ENCODE measurements at regions of chr16 and their contacts with region 1.

Region 1: GRCh38 chr16:79601931-79602627 is 1.5 kb upstream of the MAF start:
- DNase-seq: peak; percentile 51 to 78 (median 72)
- ATAC-seq: peak; percentile 20
- H3K4me3 ChIP-seq: peak overlapping the region; percentile 84
- H3K4me3 Mint-ChIP-seq: peak overlapping the region; percentile 90 to 98 (median 94)
- H3K27ac ChIP-seq: no peak overlapping the region
- H3K27ac Mint-ChIP-seq: peak overlapping the region in 7 of 9 donors; percentile 3 to 98 (median 66)
- H3K4me1 ChIP-seq: peaks cover 4 to 7% of the 10 kb centered on the region in 2 donors
- H3K4me1 Mint-ChIP-seq: peaks cover 6 to 47% (median 33%) of the 10 kb centered on the region in 7 donors
- H3K27me3 ChIP-seq: no peaks in the 10 kb centered on the region
- H3K27me3 Mint-ChIP-seq: peaks cover 15 to 24% (median 20%) of the 10 kb centered on the region in 5 donors

Region 2: DNA sequence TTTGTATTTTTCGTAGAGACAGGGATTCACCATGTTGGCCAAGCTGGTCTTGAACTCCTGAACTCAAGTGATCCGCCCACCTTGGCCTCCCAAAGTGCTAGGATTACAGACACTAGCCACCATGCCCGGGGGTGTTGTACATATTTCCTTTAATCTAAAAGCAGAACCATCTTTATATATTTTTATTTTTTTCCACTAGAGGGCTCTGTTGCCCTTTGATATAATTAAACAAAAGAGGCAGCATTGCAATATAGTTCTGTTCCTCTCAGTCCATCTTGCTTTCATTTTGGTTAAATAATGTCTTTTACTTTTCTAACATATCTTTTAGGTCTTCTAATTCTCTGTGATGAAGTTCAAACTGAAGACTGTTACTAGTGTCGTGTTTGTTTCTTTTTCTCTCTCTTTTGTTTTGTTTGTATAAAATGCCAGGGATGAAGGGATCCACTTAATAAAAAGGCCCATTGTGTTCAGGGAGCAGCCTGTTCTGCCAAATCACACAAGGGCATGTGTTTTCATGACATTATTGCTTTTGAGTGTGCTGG is 1479.2 kb before region 1 on chr16:
- CTCF ChIA-PET with region 1: no interaction called
- POLR2A ChIA-PET with region 1: no interaction called
- intact Hi-C with region 1: loop called in 1 of 2 experiments (anchors 1 kb)
- DNase-seq: peak in 6 of 9 donors; percentile 37 to 64 (median 52)
- ATAC-seq: peak; percentile 85
- H3K4me3 ChIP-seq: no peak overlapping the region
- H3K4me3 Mint-ChIP-seq: peak overlapping the region in 1 of 10 donors; percentile 7
- H3K27ac ChIP-seq: no peak overlapping the region
- H3K27ac Mint-ChIP-seq: peak overlapping the region in 1 of 9 donors; percentile 54
- H3K4me1 ChIP-seq: no peaks in the 10 kb centered on the region
- H3K4me1 Mint-ChIP-seq: peaks cover 2 to 6% (median 4%) of the 10 kb centered on the region in 7 donors
- H3K27me3 ChIP-seq: no peaks in the 10 kb centered on the region
- H3K27me3 Mint-ChIP-seq: no peaks in the 10 kb centered on the region

Region 3: DNA sequence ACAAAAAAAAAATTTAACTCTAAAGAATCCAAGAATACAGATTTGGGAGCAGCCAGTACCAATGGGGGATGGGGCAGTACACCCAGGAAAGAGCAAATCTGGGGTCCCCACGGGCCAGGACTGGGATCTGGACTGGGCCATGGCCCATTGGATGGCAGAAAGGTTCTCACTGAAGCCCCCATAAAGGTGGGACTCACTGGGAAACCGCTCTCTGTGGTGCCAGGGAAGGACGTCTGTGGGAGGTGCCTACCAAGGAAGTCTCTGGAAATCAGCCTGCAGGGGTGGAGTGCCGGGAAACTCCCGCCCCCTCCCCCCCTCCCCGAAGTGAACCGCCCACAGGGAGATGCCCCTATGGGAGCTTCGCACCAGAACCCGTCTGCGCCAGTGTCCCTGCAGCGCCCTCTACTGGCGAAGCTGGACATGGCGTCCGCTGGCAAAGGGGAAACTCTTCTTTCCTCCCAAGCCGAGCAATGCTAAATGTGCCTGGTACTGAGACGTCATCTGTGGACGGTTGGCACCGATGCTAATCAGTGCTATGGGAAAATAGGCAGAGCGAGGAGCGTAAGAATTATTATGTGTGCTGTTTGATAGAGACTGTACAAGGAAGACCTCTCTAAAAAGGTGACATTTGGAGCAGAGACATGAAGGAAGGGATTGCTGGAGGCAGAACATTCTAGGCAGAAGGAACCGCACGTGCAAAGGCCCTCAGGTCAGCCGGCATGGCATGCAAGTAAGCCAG is 831.6 kb before region 1 on chr16:
- CTCF ChIA-PET with region 1: no interaction called
- POLR2A ChIA-PET with region 1: no interaction called
- intact Hi-C with region 1: loop called (anchors 1 to 5 kb)
- DNase-seq: peak; percentile 21 to 81 (median 52)
- ATAC-seq: peak; percentile 94
- H3K4me3 ChIP-seq: no peak overlapping the region
- H3K4me3 Mint-ChIP-seq: peak overlapping the region in 2 of 10 donors; percentile 4 to 28
- H3K27ac ChIP-seq: no peak overlapping the region
- H3K27ac Mint-ChIP-seq: peak overlapping the region in 5 of 9 donors; percentile 1 to 26 (median 3)
- H3K4me1 ChIP-seq: peaks cover 0 to 21% of the 10 kb centered on the region in 2 donors
- H3K4me1 Mint-ChIP-seq: peaks cover 6 to 23% (median 7%) of the 10 kb centered on the region in 7 donors
- H3K27me3 ChIP-seq: no peaks in the 10 kb centered on the region
- H3K27me3 Mint-ChIP-seq: peaks cover 0 to 5% (median 0%) of the 10 kb centered on the region in 5 donors

Region 4: GRCh38 chr16:79169239-79169638 is 432.8 kb before region 1 on chr16:
- CTCF ChIA-PET with region 1: no interaction called
- POLR2A ChIA-PET with region 1: no interaction called
- intact Hi-C with region 1: loop called in 1 of 2 experiments (anchors 5 kb)
- DNase-seq: peak in 4 of 9 donors; percentile 4 to 7 (median 6)
- ATAC-seq: peak; percentile 41
- H3K4me3 ChIP-seq: no peak overlapping the region
- H3K4me3 Mint-ChIP-seq: peak overlapping the region in 1 of 10 donors; percentile 12
- H3K27ac ChIP-seq: no peak overlapping the region
- H3K27ac Mint-ChIP-seq: peak overlapping the region in 1 of 9 donors; percentile 38
- H3K4me1 ChIP-seq: no peaks in the 10 kb centered on the region
- H3K4me1 Mint-ChIP-seq: peaks cover 0 to 22% (median 8%) of the 10 kb centered on the region in 7 donors
- H3K27me3 ChIP-seq: no peaks in the 10 kb centered on the region
- H3K27me3 Mint-ChIP-seq: peaks cover 0 to 5% (median 0%) of the 10 kb centered on the region in 5 donors

Region 5: GRCh38 chr16:79618692-79619050 is 16.6 kb after region 1 on chr16:
- CTCF ChIA-PET with region 1: interaction called, 5 read pairs
- POLR2A ChIA-PET with region 1: no interaction called
- intact Hi-C with region 1: loop called in 1 of 2 experiments (anchors 2 kb)
- DNase-seq: peak in 1 of 9 donors; percentile 76
- ATAC-seq: no peak
- H3K4me3 ChIP-seq: no peak overlapping the region
- H3K4me3 Mint-ChIP-seq: peak overlapping the region in 1 of 10 donors; percentile 73
- H3K27ac ChIP-seq: no peak overlapping the region
- H3K27ac Mint-ChIP-seq: peak overlapping the region in 1 of 9 donors; percentile 95
- H3K4me1 ChIP-seq: peaks cover 0 to 12% of the 10 kb centered on the region in 2 donors
- H3K4me1 Mint-ChIP-seq: peaks cover 0 to 69% (median 0%) of the 10 kb centered on the region in 7 donors
- H3K27me3 ChIP-seq: no peaks in the 10 kb centered on the region
- H3K27me3 Mint-ChIP-seq: peaks cover 0 to 10% (median 8%) of the 10 kb centered on the region in 5 donors

Region 6: DNA sequence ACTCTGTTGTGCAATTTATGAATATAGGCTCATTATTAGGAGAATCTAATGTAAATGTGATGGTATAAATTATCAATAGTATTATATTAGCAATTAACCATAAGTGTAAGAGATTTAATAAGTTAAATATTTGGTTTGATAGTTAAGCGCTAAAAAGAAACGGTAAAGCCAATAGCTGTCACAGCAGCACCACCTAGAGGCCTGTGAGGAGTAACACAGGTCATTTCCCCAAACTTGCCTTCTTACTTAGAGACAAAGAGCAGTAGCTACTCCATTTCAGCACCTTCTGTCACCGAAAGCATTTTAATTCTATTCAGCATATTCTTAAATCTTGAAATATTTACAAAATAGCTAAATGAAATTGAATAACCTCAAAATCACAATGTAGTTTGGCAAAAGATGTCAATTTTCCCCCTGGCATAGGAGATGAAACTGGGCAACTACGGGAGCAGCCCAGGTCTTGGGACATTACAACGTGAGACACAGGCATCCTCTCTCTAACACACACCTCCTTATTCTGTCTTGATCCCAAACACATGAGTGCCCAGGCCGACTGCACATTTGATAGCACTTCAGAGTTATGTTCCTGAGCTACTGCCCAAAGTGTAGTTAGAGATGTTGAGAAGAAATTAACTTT is 924.5 kb after region 1 on chr16:
- CTCF ChIA-PET with region 1: interaction called, 3 read pairs
- POLR2A ChIA-PET with region 1: no interaction called
- intact Hi-C with region 1: loop called in 1 of 2 experiments (anchors 2 kb)
- DNase-seq: peak; percentile 18 to 62 (median 51)
- ATAC-seq: peak; percentile 89
- H3K4me3 ChIP-seq: no peak overlapping the region
- H3K4me3 Mint-ChIP-seq: no peak overlapping the region
- H3K27ac ChIP-seq: no peak overlapping the region
- H3K27ac Mint-ChIP-seq: peak overlapping the region in 1 of 9 donors; percentile 4
- H3K4me1 ChIP-seq: no peaks in the 10 kb centered on the region
- H3K4me1 Mint-ChIP-seq: peaks cover 0 to 20% (median 0%) of the 10 kb centered on the region in 7 donors
- H3K27me3 ChIP-seq: no peaks in the 10 kb centered on the region
- H3K27me3 Mint-ChIP-seq: peaks cover 0 to 26% (median 0%) of the 10 kb centered on the region in 5 donors

Measured in naive thymus-derived CD4-positive, alpha-beta T cell (primary cell).